ENCODE measurements at regions of chr7 and their contacts with region 1.

Region 1: GRCh38 chr7:20330240-20330927 is at the start of gene ITGB8:
- DNase-seq: peak; percentile 80
- H3K4me3 Mint-ChIP-seq: peak within 1 kb of the TSS; percentile 87
- H3K27ac Mint-ChIP-seq: peak within 1 kb of the TSS; percentile 80
- H3K4me1 Mint-ChIP-seq: peaks cover 18% of the 10 kb centered on the region
- H3K27me3 Mint-ChIP-seq: peaks cover 66% of the 10 kb centered on the region
- total RNA-seq, gene ITGB8: not detected in 2 replicates

Region 2: GRCh38 chr7:20280475-20281351 is 49.7 kb before region 1 on chr7:
- intact Hi-C with region 1: loop called (anchors 5 kb)
- DNase-seq: no peak
- H3K4me3 Mint-ChIP-seq: no peak overlapping the region
- H3K27ac Mint-ChIP-seq: no peak overlapping the region
- H3K4me1 Mint-ChIP-seq: no peaks in the 10 kb centered on the region
- H3K27me3 Mint-ChIP-seq: no peaks in the 10 kb centered on the region

Region 3: GRCh38 chr7:20598459-20599309 is 268.3 kb after region 1 on chr7:
- intact Hi-C with region 1: loop called (anchors 5 kb)
- DNase-seq: peak; percentile 57
- H3K4me3 Mint-ChIP-seq: no peak overlapping the region
- H3K27ac Mint-ChIP-seq: no peak overlapping the region
- H3K4me1 Mint-ChIP-seq: no peaks in the 10 kb centered on the region
- H3K27me3 Mint-ChIP-seq: peaks cover 3% of the 10 kb centered on the region

Measured in activated CD4-positive, alpha-beta T cell treated with anti-CD3 and anti-CD28 coated beads, Interleukin-2, amount 10 ng/mL, durations not matched to agents 24 days and 14 days (primary cell).